Activated naive CD8-positive, alpha-beta T cell treated with anti-CD3 and anti-CD28 coated beads, Interleukin-2, amount 10 ng/mL, durations not matched to agents 7 days and 5 days (primary cell): ENCODE measurements at regions of chr20 and their contacts with region 1.

Region 1: DNA sequence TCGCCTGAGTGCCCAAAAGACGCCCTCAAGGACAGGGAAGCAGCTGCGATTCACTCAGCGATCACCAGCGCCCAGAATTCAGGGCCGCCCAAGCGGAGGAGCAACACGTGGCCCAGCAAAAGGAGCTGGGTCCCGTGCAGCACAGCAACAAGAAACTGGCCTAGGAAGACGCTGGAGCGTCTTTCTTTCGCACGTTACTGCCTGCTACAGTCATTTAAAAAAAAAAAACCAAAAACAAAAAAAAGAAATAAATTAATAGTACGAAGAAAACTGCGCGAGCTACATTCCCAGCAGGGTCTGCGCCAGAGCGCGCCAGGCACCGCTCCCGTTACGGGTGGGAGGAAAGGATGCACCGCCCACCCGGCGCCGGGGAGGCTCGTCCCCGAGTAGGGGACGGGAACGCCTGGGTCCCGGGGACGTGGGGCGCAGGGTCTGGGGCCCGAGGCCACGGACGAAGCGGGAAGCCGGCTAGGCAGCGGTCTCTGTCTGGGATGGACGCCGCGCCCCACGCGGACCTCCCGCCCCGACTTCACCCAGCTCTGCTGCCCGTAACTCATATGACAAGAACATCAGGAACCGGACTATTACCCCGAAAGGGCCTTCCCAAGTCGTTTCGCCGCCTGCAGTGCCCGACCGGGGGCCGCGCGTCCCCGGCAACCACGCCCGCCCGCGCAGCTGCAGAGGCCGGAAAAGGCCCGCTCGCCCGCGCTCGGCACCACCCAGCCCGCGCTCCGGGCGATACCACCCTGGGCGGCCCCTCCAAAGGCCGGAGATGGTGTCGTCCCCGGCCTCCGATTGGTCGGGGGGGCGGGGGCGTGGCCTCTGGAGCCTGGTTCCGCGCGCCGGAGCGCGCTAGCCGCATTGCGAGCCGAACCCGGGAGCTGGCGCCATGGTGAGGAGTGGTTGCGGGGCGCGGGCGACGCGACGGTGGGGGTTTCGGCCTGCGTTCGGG is at the start of gene NOP56:
- DNase-seq: peak; percentile 99
- ATAC-seq: peak; percentile 89
- H3K4me3 Mint-ChIP-seq: peak within 1 kb of the TSS; percentile 89
- H3K27ac Mint-ChIP-seq: peak within 1 kb of the TSS; percentile 87
- H3K4me1 Mint-ChIP-seq: peaks cover 33% of the 10 kb centered on the region
- H3K27me3 Mint-ChIP-seq: no peaks in the 10 kb centered on the region
- total RNA-seq, gene NOP56: 322 to 330 TPM

Region 2: DNA sequence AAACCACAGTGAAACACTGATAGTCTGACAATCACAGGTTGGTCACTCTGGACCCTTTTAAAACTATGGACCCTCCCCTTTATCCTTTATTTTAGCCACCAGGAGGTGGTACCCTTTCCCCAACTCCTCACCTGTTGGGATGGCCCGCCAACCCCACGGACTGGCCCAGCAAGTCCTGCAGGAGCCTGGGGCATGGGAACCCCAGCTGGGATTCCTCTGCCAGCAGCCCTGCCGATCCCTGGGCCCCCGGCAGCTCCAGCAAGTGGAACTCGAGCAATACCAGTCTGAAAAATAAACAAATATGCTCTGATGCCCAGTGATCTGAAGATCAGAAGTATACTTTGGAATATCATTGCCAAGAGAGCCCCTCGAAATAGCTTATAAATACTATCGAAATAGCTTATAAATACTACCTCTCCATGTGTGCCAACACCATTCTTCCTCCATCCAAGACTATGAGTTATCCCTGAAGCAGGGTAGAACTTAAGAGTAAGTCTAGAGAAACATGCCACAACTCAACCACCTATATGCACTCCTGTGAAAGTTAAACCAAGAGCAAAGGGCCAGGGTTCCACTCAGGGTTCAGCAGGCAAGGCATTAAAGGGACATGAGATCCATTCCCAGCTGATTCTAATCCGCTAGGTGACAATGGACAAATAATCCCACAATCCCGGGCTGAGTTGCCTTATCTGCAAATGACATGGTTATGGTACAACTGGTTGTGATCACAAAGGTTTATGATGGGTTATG is 188.3 kb before region 1 on chr20:
- POLR2A ChIA-PET with region 1: no interaction called
- DNase-seq: no peak
- ATAC-seq: no peak
- H3K4me3 Mint-ChIP-seq: no peak overlapping the region
- H3K27ac Mint-ChIP-seq: no peak overlapping the region
- H3K4me1 Mint-ChIP-seq: peaks cover 29% of the 10 kb centered on the region
- H3K27me3 Mint-ChIP-seq: no peaks in the 10 kb centered on the region

Region 3: DNA sequence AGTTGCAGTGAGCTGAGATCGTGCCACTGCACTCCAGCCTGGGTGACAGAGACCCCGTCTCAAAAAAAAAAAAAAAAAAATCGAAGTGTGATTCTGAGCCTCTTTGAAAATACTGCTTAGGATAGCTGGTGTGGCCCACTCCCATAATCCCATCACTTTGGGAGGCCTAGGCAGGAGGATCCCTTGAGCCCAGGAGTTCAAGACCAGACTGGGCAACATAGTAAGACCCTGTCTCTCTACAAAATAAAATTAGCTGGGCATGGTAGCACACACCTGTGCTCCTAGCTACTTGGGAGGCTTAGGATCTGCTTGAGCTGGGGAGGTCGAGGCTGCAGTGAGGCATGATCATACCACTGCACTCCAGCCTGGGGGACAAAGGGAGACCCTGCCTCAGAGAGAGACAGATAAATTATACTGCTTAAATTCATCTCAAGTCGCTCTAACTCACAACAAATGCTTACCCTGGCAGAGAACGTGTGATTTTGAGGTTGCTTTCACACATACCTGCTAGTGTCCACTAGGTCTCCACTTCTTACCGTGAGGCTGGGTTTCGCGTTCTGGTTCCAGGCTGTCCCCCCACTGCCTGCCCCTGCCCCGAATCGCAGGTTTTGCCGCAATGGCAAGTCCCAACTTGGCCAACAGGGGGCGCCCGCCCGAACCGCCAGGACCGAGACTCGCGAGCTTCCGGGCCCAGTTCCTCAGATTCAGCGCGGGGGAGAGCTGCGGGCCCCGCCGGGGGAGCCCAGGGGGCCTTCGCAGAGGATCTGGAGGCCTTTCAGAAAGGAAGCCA is 127.9 kb before region 1 on chr20:
- POLR2A ChIA-PET with region 1: interaction called, 30 read pairs
- DNase-seq: peak; percentile 96
- ATAC-seq: peak; percentile 77
- H3K4me3 Mint-ChIP-seq: peak overlapping the region; percentile 82
- H3K27ac Mint-ChIP-seq: peak overlapping the region; percentile 89
- H3K4me1 Mint-ChIP-seq: peaks cover 18% of the 10 kb centered on the region
- H3K27me3 Mint-ChIP-seq: peaks cover 10% of the 10 kb centered on the region

Region 4: DNA sequence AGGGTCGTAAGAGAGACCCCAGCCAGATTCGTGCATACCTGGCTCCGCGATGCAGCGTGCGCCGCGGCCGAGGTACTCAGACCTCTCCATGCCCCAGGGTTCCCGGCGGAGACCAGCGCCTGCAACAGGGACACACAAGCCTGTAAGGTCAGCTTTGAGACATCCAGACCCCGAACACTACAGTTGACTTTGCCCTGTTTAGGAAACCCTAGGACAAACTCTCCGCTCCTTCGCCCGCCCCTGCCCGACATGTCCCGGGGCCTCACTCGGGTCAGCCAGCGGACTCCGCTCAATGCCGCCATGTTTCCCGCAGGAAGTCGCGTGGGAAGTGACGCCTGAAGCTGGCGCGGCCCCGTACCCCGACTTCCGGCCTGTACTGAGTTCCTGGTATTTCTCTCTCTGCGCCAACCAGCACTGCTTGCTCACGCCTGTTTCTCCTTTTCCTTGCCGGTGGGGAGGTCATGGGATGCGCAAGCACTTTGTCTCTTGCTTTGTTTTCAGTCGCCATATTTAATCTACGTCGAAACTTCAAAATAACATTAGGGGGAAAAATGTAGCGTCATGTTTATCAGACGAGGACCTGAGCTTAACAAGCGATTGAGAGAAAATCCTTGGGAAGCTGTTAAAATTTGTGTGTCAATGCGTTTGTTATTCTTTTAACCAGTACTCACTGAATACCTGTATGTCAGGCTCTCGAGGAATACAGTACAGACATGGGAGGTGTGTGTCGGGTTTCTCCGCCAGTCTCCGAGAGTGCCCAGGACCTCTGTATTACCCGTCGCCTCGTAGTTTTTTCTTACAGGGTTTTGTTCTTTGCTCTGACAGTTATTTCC is 12.1 kb after region 1 on chr20 and contains the start of gene IDH3B:
- POLR2A ChIA-PET with region 1: interaction called, 86 read pairs
- DNase-seq: peak; percentile 91
- ATAC-seq: peak; percentile 99
- H3K4me3 Mint-ChIP-seq: peak within 1 kb of the TSS; percentile 93
- H3K27ac Mint-ChIP-seq: peak within 1 kb of the TSS; percentile 96
- H3K4me1 Mint-ChIP-seq: peaks cover 18% of the 10 kb centered on the region
- H3K27me3 Mint-ChIP-seq: peaks cover 7% of the 10 kb centered on the region
- total RNA-seq, gene IDH3B: 95.8 to 96.7 TPM

Region 5: GRCh38 chr20:2840138-2840966 is 188.3 kb after region 1 on chr20 and contains the starts of genes PCED1A and VPS16:
- POLR2A ChIA-PET with region 1: interaction called, 10 read pairs
- DNase-seq: peak; percentile 96
- ATAC-seq: peak; percentile 97
- H3K4me3 Mint-ChIP-seq: peak within 1 kb of the TSS; percentile 83
- H3K27ac Mint-ChIP-seq: peak within 1 kb of the TSS; percentile 85
- H3K4me1 Mint-ChIP-seq: peaks cover 20% of the 10 kb centered on the region
- H3K27me3 Mint-ChIP-seq: no peaks in the 10 kb centered on the region
- total RNA-seq, gene PCED1A: 39.9 to 43.3 TPM
- total RNA-seq, gene VPS16: 54.6 to 56.7 TPM

Region 6: GRCh38 chr20:3115190-3116107 is 463.4 kb after region 1 on chr20:
- POLR2A ChIA-PET with region 1: no interaction called
- DNase-seq: peak; percentile 46
- ATAC-seq: peak; percentile 48
- H3K4me3 Mint-ChIP-seq: no peak overlapping the region
- H3K27ac Mint-ChIP-seq: no peak overlapping the region
- H3K4me1 Mint-ChIP-seq: peaks cover 12% of the 10 kb centered on the region
- H3K27me3 Mint-ChIP-seq: no peaks in the 10 kb centered on the region